ENCODE measurements at regions of chr16 and their contacts with region 1.

Region 1: GRCh38 chr16:8885674-8886592 is 3.8 kb downstream of the LITAFD start:
- DNase-seq: no peak
- H3K4me3 ChIP-seq: no peak overlapping the region
- H3K27ac ChIP-seq: no peak overlapping the region
- H3K4me1 ChIP-seq: no peaks in the 10 kb centered on the region
- H3K27me3 ChIP-seq: no peaks in the 10 kb centered on the region
- CTCF ChIP-seq: no peak
- POLR2A ChIP-seq: no peak

Region 2: DNA sequence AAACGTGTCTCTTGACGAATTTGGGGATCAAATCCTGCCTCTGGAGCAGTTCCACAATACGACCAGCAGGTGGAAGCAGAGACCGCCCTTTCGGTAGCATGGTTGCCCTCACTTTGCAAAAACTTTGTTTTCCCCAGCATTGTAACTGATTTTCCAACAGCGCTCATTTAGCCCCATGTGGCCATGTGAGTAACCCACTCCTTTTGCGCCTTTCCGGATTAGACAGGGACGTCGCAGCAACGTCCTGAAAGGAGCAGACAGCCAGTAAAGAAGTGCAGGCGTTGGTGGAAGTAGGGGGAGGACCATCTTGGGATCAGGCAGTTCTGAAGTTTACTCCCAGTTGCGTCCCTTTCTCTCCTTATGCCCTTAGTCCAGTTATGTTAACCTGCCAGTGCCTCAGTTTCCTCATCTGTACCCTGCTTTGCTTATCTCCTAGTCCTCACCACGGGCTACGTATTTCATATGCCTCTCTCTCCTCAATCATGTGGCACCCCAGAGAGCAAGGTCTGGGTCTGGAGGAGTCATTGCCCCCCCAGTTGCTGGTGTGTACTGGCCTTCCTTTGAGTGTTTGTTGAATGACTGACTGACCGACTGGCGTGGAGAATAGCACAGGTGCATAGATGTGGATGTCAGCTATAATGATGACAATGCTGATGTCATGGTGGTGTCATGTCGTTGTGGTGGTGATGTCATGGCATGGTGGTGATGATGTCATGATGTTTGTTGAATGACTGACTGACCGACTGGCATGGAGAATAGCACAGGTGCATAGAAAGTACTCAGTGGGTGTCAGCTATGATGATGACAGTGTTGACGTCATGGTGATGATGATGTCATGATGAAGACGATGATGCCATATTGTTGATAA is 317.9 kb before region 1 on chr16:
- intact Hi-C with region 1: loop called (anchors 10 kb)
- DNase-seq: peak; percentile 58 to 66
- H3K4me3 ChIP-seq: no peak overlapping the region
- H3K27ac ChIP-seq: no peak overlapping the region
- H3K4me1 ChIP-seq: no peaks in the 10 kb centered on the region
- H3K27me3 ChIP-seq: peaks cover 0 to 3% of the 10 kb centered on the region in 2 donors
- CTCF ChIP-seq: peak; percentile 95 to 98 (median 96)
- POLR2A ChIP-seq: no peak

Region 3: GRCh38 chr16:8655184-8655717 is 230.7 kb before region 1 on chr16:
- intact Hi-C with region 1: loop called (anchors 10 kb)
- DNase-seq: no peak
- H3K4me3 ChIP-seq: no peak overlapping the region
- H3K27ac ChIP-seq: no peak overlapping the region
- H3K4me1 ChIP-seq: no peaks in the 10 kb centered on the region
- H3K27me3 ChIP-seq: no peaks in the 10 kb centered on the region
- CTCF ChIP-seq: peak in 2 of 4 experiments; percentile 2 to 12
- POLR2A ChIP-seq: no peak

Measured in uterus (tissue), 4 donors.